ENCODE measurements at regions of chr7 and their contacts with region 1.

Region 1: GRCh38 chr7:50206453-50207250 is 97.9 kb upstream of the IKZF1 start:
- DNase-seq: no peak
- H3K4me3 Mint-ChIP-seq: no peak overlapping the region
- H3K27ac Mint-ChIP-seq: no peak overlapping the region
- H3K4me1 Mint-ChIP-seq: no peaks in the 10 kb centered on the region
- H3K27me3 Mint-ChIP-seq: peaks cover 56% of the 10 kb centered on the region
- CTCF ChIP-seq: no peak

Region 2: GRCh38 chr7:50156706-50157105 is 49.9 kb before region 1 on chr7:
- CTCF ChIA-PET with region 1: interaction called, 10 read pairs
- POLR2A ChIA-PET with region 1: no interaction called
- intact Hi-C with region 1: no loop called
- DNase-seq: no peak
- H3K4me3 Mint-ChIP-seq: no peak overlapping the region
- H3K27ac Mint-ChIP-seq: no peak overlapping the region
- H3K4me1 Mint-ChIP-seq: no peaks in the 10 kb centered on the region
- H3K27me3 Mint-ChIP-seq: no peaks in the 10 kb centered on the region
- CTCF ChIP-seq: no peak

Region 3: DNA sequence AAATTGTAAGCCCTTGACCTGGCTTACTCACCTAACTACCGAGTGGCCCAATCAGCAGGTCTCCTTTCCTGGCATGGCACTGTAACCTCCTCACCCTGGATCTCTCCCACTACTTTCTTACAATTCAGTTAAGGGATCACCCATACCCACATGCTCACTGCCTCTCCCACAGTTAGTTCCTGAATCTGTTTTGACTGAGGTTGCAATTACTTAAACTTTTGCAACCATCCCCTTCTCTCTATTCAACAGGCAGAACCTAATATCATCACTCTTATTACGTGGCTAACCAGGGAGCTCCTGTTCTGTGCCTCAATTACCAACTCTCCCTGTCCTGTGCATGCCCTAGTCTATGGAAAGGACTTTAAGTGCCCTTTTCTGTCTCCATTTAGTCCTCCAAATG is 13.6 kb after region 1 on chr7:
- CTCF ChIA-PET with region 1: interaction called, 23 read pairs
- POLR2A ChIA-PET with region 1: interaction called, 3 read pairs
- intact Hi-C with region 1: no loop called
- DNase-seq: no peak
- H3K4me3 Mint-ChIP-seq: no peak overlapping the region
- H3K27ac Mint-ChIP-seq: no peak overlapping the region
- H3K4me1 Mint-ChIP-seq: no peaks in the 10 kb centered on the region
- H3K27me3 Mint-ChIP-seq: peaks cover 32% of the 10 kb centered on the region
- CTCF ChIP-seq: no peak

Region 4: GRCh38 chr7:50251765-50252164 is 45.1 kb after region 1 on chr7:
- CTCF ChIA-PET with region 1: no interaction called
- POLR2A ChIA-PET with region 1: no interaction called
- intact Hi-C with region 1: no loop called
- DNase-seq: no peak
- H3K4me3 Mint-ChIP-seq: no peak overlapping the region
- H3K27ac Mint-ChIP-seq: no peak overlapping the region
- H3K4me1 Mint-ChIP-seq: no peaks in the 10 kb centered on the region
- H3K27me3 Mint-ChIP-seq: peaks cover 80% of the 10 kb centered on the region
- CTCF ChIP-seq: no peak

Region 5: DNA sequence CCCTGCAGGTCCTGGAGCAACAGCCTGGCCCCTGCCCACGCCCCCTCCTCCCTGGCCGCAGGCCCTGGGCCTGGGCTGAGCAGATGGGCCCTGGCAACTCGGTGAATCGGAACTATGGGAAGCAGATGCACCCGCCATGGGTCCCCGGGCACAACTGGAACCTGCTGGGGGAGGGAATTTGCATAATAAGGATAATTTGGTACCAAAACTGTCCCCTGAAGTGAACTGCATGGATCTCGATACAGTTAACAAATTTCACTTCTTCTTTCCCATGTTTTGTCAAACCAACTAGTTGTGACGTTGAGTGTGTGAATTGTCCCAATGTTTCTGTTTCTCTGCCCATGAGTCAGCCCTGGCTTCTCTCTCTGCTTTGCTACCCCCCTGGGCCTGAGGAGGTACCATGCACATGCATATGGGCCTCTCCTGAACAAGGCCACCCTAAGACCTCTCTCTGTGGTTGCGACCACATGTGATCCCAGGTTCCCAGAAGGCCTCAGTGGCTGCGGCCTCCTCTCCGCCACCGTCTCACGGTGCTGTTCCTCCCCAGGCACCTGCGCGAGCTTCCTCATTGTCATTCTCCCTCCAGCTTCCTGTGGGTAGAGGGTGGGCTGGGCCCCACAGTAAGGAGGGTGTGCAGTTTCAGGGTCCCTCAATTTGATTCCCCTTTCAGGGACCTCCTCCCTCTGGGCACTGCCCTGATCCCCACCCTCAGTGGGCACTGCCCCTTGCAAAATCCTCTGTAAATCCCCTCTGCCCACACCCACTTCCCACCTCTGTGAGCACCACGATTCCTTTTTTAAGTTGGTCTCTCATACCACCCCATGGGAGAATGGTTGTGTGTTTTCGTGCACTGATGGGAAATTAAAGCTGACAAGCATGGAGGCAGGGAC is 203.4 kb after region 1 on chr7:
- CTCF ChIA-PET with region 1: interaction called, 214 read pairs
- POLR2A ChIA-PET with region 1: no interaction called
- intact Hi-C with region 1: no loop called
- DNase-seq: no peak
- H3K4me3 Mint-ChIP-seq: no peak overlapping the region
- H3K27ac Mint-ChIP-seq: no peak overlapping the region
- H3K4me1 Mint-ChIP-seq: no peaks in the 10 kb centered on the region
- H3K27me3 Mint-ChIP-seq: peaks cover 46% of the 10 kb centered on the region
- CTCF ChIP-seq: no peak

Region 6: DNA sequence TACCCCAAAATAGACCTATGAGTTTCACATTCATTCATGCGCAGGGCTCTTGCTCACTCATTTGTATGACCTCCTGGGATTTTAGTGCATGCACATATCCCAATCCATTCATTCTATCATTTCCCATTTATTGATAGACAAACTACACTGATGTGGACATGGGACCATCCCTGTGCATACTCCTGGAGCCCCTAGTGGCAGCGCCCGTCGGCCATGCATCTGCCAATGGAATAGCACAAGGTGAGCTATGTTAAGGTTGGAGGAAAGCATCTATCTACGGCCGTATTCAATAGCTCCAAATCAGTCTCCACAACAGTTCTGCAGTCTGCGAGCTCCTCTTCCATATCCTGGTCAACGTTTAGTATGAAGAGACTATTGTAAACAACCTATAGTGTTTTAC is 275.2 kb after region 1 on chr7:
- CTCF ChIA-PET with region 1: no interaction called
- POLR2A ChIA-PET with region 1: no interaction called
- intact Hi-C with region 1: no loop called
- DNase-seq: no peak
- H3K4me3 Mint-ChIP-seq: no peak overlapping the region
- H3K27ac Mint-ChIP-seq: no peak overlapping the region
- H3K4me1 Mint-ChIP-seq: no peaks in the 10 kb centered on the region
- H3K27me3 Mint-ChIP-seq: no peaks in the 10 kb centered on the region
- CTCF ChIP-seq: no peak

Region 7: DNA sequence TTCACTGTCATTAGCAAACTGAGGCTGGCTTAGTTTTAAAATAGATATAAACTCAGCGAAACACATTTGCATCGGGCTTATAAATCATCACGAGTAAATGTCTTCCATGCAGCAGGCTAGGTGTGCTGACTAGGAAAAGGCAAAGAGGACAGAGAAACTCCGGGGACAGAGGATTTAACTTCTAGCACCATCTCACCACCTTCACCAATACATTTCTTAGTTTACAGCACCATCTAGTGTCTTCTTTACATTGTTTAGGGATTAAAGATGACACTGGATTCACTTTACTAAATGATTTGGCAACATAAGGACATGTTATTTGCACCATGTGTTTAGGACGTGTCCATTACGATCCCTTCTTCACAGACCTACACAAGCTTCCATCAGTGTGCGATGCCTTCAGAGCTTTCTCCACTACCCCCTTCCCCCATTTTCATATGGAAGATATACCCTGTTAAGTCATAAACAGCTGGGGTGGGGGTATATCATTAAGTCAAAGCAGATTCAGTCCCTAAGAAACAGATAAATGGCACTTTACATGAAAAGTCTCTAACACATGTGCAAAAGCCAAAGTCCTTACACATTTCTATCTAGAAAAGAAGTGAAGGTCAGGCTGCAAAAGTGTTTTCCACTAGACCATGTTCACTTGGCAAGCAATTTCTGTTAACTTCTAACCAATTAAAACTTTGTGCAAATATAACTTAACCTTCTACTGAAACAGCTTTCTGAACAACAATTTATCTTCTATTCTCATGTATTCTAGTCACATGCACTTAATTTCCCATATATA is 472.8 kb after region 1 on chr7:
- CTCF ChIA-PET with region 1: interaction called, 7 read pairs
- POLR2A ChIA-PET with region 1: no interaction called
- intact Hi-C with region 1: loop called (anchors 1 kb)
- DNase-seq: peak; percentile 58
- H3K4me3 Mint-ChIP-seq: no peak overlapping the region
- H3K27ac Mint-ChIP-seq: no peak overlapping the region
- H3K4me1 Mint-ChIP-seq: peaks cover 6% of the 10 kb centered on the region
- H3K27me3 Mint-ChIP-seq: no peaks in the 10 kb centered on the region
- CTCF ChIP-seq: peak; percentile 40